Right ventricle myocardium superior (tissue), 1 donor: ENCODE measurements at regions of chr5 and their contacts with region 1.

Region 1: DNA sequence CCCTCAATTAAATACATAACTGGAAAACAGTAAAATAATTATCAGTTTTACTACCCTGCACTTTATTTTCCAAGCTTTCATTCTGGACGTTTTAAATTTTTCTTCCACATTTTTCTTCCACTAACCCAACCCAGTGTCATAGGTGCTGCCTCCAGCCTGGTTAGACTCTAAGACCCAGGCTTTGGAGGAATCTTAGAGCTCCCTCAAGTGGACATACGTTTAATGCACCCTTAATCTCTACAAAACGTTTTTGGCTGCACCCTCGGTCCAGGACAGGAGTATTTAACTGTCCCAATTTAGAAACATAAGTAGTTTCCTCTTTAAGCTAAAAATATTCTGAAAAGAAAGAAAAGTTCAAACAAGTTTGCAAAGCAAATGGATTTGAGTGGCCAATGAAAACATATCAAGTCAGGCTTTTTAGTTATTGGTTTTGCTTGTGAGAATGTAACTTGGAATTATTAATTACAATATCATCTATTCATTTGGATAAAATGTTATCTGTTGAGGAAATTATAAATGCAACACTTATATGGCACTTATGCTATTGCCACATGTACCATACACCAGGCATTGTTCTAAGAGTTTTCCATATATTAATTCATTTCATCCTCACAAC is 38.9 kb downstream of the CDH6 start:
- DNase-seq: no peak
- ATAC-seq: peak; percentile 96

Region 2: GRCh38 chr5:30401479-30402058 is 830.8 kb before region 1 on chr5:
- intact Hi-C with region 1: loop called (anchors 10 kb)
- DNase-seq: peak; percentile 46
- ATAC-seq: no peak

Region 3: GRCh38 chr5:31470608-31471007 is 238.2 kb after region 1 on chr5:
- intact Hi-C with region 1: no loop called
- DNase-seq: peak; percentile 80
- ATAC-seq: peak; percentile 72